ENCODE measurements at regions of chr4 and their contacts with region 1.

Region 1: DNA sequence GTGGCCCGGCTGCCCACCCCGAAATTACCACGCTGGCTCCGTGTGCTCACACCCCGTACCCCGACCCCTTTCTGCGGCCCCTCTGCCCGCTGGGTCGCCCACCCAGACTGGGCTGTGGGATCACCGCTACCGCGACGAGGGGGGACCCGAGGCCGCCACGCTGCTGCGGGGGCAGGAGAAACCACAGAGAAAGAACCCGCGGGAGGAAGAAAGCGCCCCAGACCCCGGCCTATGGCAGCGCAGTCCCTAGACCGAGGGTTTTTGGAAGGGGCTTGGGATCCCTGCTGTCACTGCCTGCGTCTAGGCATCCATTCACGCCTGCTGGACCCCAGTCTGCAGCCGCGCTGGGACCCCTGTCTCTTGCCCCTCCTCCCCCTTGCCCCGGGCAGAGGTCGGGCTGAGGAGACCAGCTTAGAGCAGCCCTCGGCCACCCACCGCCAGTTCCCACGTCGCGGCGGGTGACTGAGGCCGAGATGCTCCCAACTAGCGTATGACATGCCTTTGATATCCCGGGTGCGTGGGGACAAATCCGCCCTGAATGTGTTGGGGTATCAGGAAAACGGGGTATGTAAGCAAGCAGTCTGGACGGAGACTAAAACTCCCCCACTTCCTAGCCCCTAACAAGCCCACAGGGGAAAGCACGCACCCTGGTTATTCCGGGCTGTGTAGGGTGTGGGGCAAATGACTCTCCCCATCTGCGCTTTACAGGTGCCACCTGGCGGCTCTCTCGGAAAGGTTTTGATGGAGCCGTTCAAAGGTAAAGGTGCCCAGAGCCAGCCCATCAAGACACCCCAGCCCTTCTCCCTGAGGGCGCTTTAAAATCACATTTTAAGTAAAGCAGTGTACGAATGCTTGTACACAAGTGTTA is 862 bp upstream of the INPP4B start:
- DNase-seq: peak; percentile 92
- H3K4me3 Mint-ChIP-seq: peak overlapping the region; percentile 95
- H3K27ac Mint-ChIP-seq: peak overlapping the region; percentile 89
- H3K4me1 Mint-ChIP-seq: peaks cover 18% of the 10 kb centered on the region
- H3K27me3 Mint-ChIP-seq: peaks cover 22% of the 10 kb centered on the region

Region 2: DNA sequence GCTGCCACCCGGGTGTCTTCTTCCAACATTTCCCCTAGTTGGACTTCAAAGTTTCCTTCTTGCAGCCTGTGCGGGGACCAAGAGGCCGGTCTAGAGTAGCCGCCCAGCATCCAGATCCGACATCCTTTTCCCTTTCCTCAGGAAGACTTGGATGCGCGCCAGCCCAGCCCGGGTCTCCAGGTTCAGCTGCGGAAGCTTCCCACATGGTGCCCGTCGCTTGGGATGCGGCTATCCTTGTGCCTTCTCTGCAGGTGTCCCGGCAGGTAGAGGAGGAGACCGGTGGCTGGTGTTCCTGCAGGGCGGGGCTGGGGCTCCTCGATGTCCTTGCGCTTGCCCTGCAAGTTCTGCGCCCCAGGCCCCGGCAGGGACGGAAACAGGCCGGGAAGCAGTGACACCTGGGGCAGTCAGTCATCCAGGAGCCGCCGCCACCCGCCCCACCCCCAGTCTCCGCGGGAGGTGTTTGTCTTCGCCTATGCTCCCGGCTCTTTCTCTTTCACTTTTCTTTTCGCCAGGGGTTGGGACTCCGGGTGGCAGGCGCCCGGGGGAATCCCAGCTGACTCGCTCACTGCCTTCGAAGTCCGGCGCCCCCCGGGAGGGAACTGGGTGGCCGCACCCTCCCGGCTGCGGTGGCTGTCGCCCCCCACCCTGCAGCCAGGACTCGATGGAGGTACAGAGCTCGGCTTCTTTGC is 1210.7 kb before region 1 on chr4 and contains the start of gene IL15:
- intact Hi-C with region 1: loop called (anchors 2 kb)
- DNase-seq: peak; percentile 92
- H3K4me3 Mint-ChIP-seq: peak within 1 kb of the TSS; percentile 98
- H3K27ac Mint-ChIP-seq: peak within 1 kb of the TSS; percentile 80
- H3K4me1 Mint-ChIP-seq: peaks cover 15% of the 10 kb centered on the region
- H3K27me3 Mint-ChIP-seq: peaks cover 24% of the 10 kb centered on the region
- total RNA-seq, gene IL15: 0.86 and 0.92 TPM in 2 replicates

Region 3: DNA sequence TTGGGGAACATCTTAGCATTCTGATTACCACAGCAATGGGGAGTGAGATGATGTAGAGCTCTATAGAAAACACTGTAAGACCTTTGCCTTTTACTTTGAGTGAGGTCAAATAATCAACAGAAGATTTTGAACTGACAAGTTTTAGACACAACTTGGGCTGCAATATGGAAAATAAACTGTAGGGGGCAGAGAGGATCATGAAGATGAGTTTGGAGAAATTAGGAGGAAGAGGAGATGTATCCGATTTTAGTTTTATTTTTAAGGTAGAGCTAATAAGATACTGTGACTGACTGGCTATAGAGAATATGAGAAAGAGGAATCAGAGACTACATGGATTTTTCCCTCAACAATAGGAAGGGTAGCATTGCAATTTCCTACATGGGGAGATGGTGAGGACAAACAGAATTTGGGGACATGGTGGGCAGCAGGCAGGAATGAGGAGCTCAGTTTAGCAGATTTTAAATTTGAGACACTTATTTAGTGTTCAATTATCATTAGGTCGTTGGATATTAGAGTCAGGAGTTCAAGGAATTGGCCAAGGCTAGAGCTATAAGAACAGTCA is 564.0 kb before region 1 on chr4:
- intact Hi-C with region 1: loop called (anchors 2 kb)
- DNase-seq: peak; percentile 84
- H3K4me3 Mint-ChIP-seq: no peak overlapping the region
- H3K27ac Mint-ChIP-seq: no peak overlapping the region
- H3K4me1 Mint-ChIP-seq: peaks cover 10% of the 10 kb centered on the region
- H3K27me3 Mint-ChIP-seq: no peaks in the 10 kb centered on the region

Region 4: GRCh38 chr4:142405021-142405694 is 441.8 kb before region 1 on chr4:
- intact Hi-C with region 1: loop called (anchors 5 kb)
- DNase-seq: peak; percentile 88
- H3K4me3 Mint-ChIP-seq: peak overlapping the region; percentile 95
- H3K27ac Mint-ChIP-seq: peak overlapping the region; percentile 100
- H3K4me1 Mint-ChIP-seq: peaks cover 57% of the 10 kb centered on the region
- H3K27me3 Mint-ChIP-seq: no peaks in the 10 kb centered on the region

Region 5: GRCh38 chr4:142719854-142720541 is 127.0 kb before region 1 on chr4:
- intact Hi-C with region 1: loop called (anchors 2 kb)
- DNase-seq: peak; percentile 67
- H3K4me3 Mint-ChIP-seq: no peak overlapping the region
- H3K27ac Mint-ChIP-seq: no peak overlapping the region
- H3K4me1 Mint-ChIP-seq: peaks cover 11% of the 10 kb centered on the region
- H3K27me3 Mint-ChIP-seq: no peaks in the 10 kb centered on the region

Region 6: DNA sequence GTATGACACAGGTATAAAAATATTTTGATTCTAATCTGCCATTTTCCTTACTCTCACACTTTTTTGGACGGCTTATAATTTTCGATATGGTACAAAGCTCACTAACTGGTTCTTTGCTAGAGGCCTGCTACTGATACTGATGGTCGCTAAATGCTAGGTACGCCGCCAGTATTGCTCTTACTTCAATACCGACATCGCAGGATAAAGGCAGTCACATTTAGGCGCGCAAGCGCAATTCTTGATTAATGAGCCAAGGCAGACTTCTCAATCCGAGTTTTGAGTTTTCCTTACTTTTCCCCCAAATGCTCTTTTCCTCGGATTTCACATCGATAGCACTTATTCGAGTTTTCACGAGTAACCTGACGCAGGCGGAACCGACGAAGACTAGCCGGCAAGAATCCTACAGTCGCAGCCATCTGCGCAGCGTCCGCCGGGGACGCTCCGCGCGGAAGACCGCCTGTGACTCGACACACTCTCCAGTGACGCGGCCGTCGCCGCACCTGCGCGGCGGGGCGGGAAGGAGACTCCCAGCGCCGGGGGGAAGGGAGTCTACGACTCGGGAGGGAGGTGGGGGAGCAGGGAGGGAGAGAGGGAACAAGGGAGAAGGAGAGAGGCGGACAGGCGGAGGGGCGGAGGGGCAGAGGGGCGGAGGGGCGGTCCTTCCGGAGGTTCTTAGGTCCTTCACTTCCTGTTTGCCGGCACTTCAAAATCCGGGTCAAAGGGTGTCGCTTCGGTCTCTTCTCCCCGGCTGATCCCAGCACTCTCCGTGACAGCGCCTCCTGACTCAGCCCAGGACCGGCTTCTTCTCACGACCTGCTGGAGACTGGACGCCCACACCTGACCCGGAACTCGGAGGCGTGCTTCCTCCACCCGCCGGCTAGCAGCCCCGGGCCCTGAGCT is 337.5 kb after region 1 on chr4 and contains the start of gene USP38:
- intact Hi-C with region 1: loop called (anchors 5 kb)
- DNase-seq: peak; percentile 94
- H3K4me3 Mint-ChIP-seq: peak within 1 kb of the TSS; percentile 90
- H3K27ac Mint-ChIP-seq: peak within 1 kb of the TSS; percentile 95
- H3K4me1 Mint-ChIP-seq: peaks cover 39% of the 10 kb centered on the region
- H3K27me3 Mint-ChIP-seq: no peaks in the 10 kb centered on the region
- total RNA-seq, gene USP38: 28.5 and 28.7 TPM in 2 replicates

Measured in activated CD4-positive, alpha-beta T cell treated with anti-CD3 and anti-CD28 coated beads, Interleukin-2, amount 10 ng/mL, durations not matched to agents 24 days and 14 days (primary cell).